ENCODE measurements at regions of chr5 and their contacts with region 1.

Region 1: GRCh38 chr5:91383027-91383955 is at the start of gene ARRDC3:
- DNase-seq: peak; percentile 93 to 99 (median 96)
- ATAC-seq: peak; percentile 62 to 71 (median 67)
- H3K4me3 ChIP-seq: peak within 1 kb of the TSS; percentile 57 to 80 (median 58)
- H3K27ac ChIP-seq: peak within 1 kb of the TSS; percentile 97 to 100 (median 99)
- H3K4me1 ChIP-seq: peaks cover 5 to 9% (median 8%) of the 10 kb centered on the region in 3 donors
- H3K27me3 ChIP-seq: no peaks in the 10 kb centered on the region
- CTCF ChIP-seq: no peak
- total RNA-seq, gene ARRDC3: 11.4 to 79.6 (median 24.9) TPM

Region 2: GRCh38 chr5:90866333-90866732 is 517.0 kb before region 1 on chr5:
- intact Hi-C with region 1: loop called in 1 of 3 experiments (anchors 10 kb)
- DNase-seq: no peak
- ATAC-seq: peak; percentile 71 to 92 (median 88)
- H3K4me3 ChIP-seq: no peak overlapping the region
- H3K27ac ChIP-seq: no peak overlapping the region
- H3K4me1 ChIP-seq: peaks cover 0 to 9% (median 0%) of the 10 kb centered on the region in 3 donors
- H3K27me3 ChIP-seq: no peaks in the 10 kb centered on the region
- CTCF ChIP-seq: peak in 3 of 4 donors; percentile 8 to 43 (median 24)

Region 3: GRCh38 chr5:91101600-91102379 is 281.5 kb before region 1 on chr5:
- intact Hi-C with region 1: loop called in 2 of 3 experiments (anchors 5 kb)
- DNase-seq: peak; percentile 49 to 73 (median 57)
- ATAC-seq: peak; percentile 92 to 99 (median 98)
- H3K4me3 ChIP-seq: no peak overlapping the region
- H3K27ac ChIP-seq: no peak overlapping the region
- H3K4me1 ChIP-seq: peaks cover 0 to 11% (median 0%) of the 10 kb centered on the region in 3 donors
- H3K27me3 ChIP-seq: no peaks in the 10 kb centered on the region
- CTCF ChIP-seq: peak; percentile 27 to 57 (median 49)

Region 4: DNA sequence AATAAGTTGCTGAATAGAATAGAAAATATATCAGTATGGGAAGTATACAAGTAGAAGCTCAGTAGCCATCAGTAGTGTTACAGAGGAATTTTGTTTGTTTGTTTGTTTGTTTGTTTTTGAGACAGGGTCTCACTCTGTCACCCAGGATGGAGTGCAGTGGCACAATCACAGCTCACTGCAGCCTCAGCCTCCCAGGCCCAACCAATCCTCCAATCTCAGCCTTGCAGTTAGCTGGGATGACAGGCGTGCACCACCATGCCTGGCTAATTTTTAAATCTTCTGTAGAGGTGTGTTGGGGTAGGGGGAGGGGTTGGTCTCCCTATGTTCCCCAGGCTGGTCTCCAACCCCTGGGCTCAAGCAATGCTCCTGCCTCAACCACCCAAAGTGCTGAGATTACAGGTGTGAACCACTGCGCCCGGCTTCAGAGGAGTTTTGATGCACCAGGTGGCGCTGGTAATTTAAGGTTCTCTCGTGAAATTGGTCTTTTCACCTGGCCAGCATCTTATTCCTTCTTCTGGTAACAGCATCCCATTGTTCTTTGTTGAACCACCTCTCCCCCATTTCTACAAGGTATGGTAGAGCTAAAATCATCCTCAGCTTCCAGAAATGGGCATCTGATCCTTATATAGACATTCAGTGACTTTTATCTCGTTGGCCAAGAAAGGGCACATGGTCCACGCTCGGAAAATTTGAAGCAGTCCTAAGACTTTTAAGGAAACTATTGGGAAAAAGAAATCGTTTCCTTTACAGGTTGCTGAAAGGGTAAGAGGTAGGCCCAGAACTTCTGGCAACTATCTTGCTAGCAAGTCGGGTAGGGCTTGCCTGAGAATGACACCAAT is 157.2 kb before region 1 on chr5:
- intact Hi-C with region 1: loop called in 1 of 3 experiments (anchors 10 kb)
- DNase-seq: peak; percentile 28 to 66 (median 46)
- ATAC-seq: peak; percentile 73 to 94 (median 91)
- H3K4me3 ChIP-seq: no peak overlapping the region
- H3K27ac ChIP-seq: no peak overlapping the region
- H3K4me1 ChIP-seq: peaks cover 0 to 13% (median 0%) of the 10 kb centered on the region in 3 donors
- H3K27me3 ChIP-seq: no peaks in the 10 kb centered on the region
- CTCF ChIP-seq: peak in 3 of 4 donors; percentile 28 to 37 (median 35)

Region 5: DNA sequence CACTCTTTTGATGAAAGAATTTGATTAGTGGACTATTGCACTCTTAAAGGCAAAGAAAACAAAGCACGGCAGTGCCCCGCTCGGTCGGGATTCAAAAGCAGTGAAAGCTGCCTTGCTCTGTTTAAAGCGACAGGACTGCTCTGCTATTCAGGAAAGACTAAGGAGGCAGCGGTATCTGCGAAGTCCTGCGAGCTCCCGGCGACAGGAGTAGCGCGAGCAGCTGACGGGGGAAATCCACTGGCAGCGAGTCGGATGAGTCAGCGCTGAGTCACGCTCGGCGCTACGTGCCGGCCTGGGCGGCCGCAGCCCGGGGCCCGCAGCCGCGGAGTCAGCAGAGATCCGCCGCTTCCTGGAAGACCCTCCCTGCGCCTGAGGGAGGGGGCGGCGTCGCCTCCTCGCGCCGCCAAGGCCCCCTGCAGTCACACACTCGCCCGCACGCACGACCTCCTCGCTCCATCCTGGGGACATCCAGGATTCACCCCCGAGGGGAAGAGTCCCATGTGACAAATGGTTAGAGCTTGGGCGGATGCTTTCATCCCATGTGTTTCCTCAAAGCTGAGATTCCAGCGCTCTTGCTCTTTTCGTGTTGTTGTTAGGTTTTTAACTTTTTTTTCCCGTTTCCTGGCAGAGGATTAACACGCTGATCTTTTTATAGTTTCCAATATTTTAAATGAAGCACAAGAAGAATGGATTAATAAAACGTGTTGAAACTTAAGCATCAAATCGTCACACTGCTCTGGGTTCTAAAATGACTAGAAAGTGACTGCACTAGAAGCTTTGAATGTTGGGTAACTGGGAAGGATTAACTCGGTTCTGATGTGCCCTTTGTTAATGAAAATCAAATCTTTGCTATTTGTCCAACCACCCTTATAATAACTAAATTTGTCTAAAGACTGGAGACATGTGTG is 102.7 kb before region 1 on chr5:
- intact Hi-C with region 1: loop called in 1 of 3 experiments (anchors 5 kb)
- DNase-seq: peak; percentile 89 to 95 (median 93)
- ATAC-seq: peak; percentile 94 to 98 (median 96)
- H3K4me3 ChIP-seq: peak overlapping the region; percentile 29 to 59 (median 36)
- H3K27ac ChIP-seq: peak overlapping the region; percentile 60 to 94 (median 85)
- H3K4me1 ChIP-seq: peaks cover 0 to 13% (median 0%) of the 10 kb centered on the region in 3 donors
- H3K27me3 ChIP-seq: no peaks in the 10 kb centered on the region
- CTCF ChIP-seq: no peak

Region 6: DNA sequence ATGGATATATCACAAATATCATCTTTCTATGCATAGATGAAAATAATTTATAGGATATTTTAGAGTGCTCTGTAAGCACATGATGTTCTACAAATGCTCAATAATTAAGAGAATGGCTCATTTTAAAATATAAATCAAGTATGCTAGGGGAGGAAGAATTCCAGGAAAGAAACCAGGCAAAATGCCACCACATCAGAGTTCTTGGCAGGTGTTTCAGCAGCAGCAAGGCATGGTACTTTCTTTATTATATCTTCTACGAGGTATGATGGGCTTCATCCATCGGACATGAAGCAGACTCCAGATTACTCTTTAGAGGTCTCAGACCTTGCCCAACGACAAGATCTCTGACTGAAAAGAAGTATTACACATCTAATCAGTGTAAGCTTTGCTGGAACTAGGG is 316.1 kb after region 1 on chr5:
- intact Hi-C with region 1: no loop called
- DNase-seq: no peak
- ATAC-seq: no peak
- H3K4me3 ChIP-seq: no peak overlapping the region
- H3K27ac ChIP-seq: no peak overlapping the region
- H3K4me1 ChIP-seq: no peaks in the 10 kb centered on the region
- H3K27me3 ChIP-seq: no peaks in the 10 kb centered on the region
- CTCF ChIP-seq: no peak